ENCODE measurements at regions of chr15 and their contacts with region 1.

Region 1: GRCh38 chr15:82108489-82109078 is 62.8 kb upstream of the MEX3B start:
- DNase-seq: peak; percentile 79
- ATAC-seq: peak; percentile 93
- H3K4me3 ChIP-seq: no peak overlapping the region
- H3K27ac ChIP-seq: no peak overlapping the region
- H3K4me1 ChIP-seq: peaks cover 6% of the 10 kb centered on the region; the same call in 1 of the 2 replicates
- H3K27me3 ChIP-seq: no peaks in the 10 kb centered on the region
- CTCF ChIP-seq: peak; percentile 95

Region 2: GRCh38 chr15:81410318-81410753 is 698.2 kb before region 1 on chr15:
- CTCF ChIA-PET with region 1: no interaction called
- POLR2A ChIA-PET with region 1: no interaction called
- intact Hi-C with region 1: loop called (anchors 5 kb)
- DNase-seq: peak; percentile 78
- ATAC-seq: peak; percentile 74
- H3K4me3 ChIP-seq: no peak overlapping the region
- H3K27ac ChIP-seq: no peak overlapping the region
- H3K4me1 ChIP-seq: no peaks in the 10 kb centered on the region
- H3K27me3 ChIP-seq: peaks cover 38% of the 10 kb centered on the region
- CTCF ChIP-seq: peak; percentile 72

Region 3: GRCh38 chr15:82139823-82140268 is 31.3 kb after region 1 on chr15:
- CTCF ChIA-PET with region 1: interaction called, 26 read pairs
- POLR2A ChIA-PET with region 1: no interaction called
- intact Hi-C with region 1: loop called (anchors 1 kb)
- DNase-seq: peak; percentile 69
- ATAC-seq: no peak
- H3K4me3 ChIP-seq: no peak overlapping the region
- H3K27ac ChIP-seq: no peak overlapping the region
- H3K4me1 ChIP-seq: peaks cover 19% of the 10 kb centered on the region
- H3K27me3 ChIP-seq: no peaks in the 10 kb centered on the region
- CTCF ChIP-seq: peak; percentile 82

Region 4: GRCh38 chr15:82197733-82198594 is 89.4 kb after region 1 on chr15:
- CTCF ChIA-PET with region 1: interaction called, 10 read pairs
- POLR2A ChIA-PET with region 1: no interaction called
- intact Hi-C with region 1: loop called (anchors 1 kb)
- DNase-seq: peak; percentile 81
- ATAC-seq: peak; percentile 96
- H3K4me3 ChIP-seq: no peak overlapping the region
- H3K27ac ChIP-seq: no peak overlapping the region
- H3K4me1 ChIP-seq: no peaks in the 10 kb centered on the region
- H3K27me3 ChIP-seq: no peaks in the 10 kb centered on the region
- CTCF ChIP-seq: peak; percentile 80